Heart left ventricle (tissue), 16 donors: ENCODE measurements at regions of chr16 and their contacts with region 1.

Region 1: DNA sequence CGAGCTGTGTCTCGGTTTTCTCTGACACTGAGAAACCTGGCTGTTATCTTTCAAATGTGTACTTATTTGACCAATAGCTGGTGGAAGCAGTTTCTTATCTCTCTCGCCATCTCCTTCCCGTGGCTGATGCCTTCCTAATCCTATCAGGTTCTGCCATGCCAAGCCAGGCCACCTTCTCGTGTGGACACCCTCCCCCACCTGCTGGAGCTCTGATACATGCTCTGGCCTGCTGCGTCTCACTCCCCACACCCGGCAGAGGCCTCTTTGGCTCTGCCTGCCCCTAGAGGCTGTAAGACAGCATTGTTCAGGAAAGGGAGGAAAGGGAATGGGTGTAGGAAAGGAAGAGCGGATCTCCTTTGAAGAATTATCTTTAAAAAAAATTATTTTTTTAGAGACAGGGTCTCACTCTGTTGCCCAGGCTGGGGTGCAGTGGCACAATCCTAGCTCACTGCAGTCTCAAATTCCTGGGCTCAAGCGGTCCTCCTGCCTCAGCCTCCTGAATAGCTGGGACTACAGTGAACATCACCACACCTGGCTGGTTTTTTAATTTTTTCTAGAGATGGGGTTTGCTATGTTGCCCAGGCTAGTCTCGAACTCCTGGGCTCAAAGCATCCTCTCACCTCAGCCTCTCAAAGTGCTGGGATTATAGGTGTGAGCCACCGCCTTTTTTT is 7.5 kb upstream of the ARMC5 start:
- DNase-seq: peak in 2 of 5 donors; percentile 72 to 78
- ATAC-seq: peak; percentile 43 to 84 (median 79)
- H3K4me3 ChIP-seq: no peak overlapping the region
- H3K27ac ChIP-seq: peak overlapping the region in 8 of 12 donors; percentile 29 to 69 (median 54)
- H3K4me1 ChIP-seq: peaks cover 5 to 56% (median 46%) of the 10 kb centered on the region in 12 donors
- H3K27me3 ChIP-seq: no peaks in the 10 kb centered on the region
- CTCF ChIP-seq: peak; percentile 9 to 64 (median 40)
- POLR2A ChIP-seq: no peak

Region 2: DNA sequence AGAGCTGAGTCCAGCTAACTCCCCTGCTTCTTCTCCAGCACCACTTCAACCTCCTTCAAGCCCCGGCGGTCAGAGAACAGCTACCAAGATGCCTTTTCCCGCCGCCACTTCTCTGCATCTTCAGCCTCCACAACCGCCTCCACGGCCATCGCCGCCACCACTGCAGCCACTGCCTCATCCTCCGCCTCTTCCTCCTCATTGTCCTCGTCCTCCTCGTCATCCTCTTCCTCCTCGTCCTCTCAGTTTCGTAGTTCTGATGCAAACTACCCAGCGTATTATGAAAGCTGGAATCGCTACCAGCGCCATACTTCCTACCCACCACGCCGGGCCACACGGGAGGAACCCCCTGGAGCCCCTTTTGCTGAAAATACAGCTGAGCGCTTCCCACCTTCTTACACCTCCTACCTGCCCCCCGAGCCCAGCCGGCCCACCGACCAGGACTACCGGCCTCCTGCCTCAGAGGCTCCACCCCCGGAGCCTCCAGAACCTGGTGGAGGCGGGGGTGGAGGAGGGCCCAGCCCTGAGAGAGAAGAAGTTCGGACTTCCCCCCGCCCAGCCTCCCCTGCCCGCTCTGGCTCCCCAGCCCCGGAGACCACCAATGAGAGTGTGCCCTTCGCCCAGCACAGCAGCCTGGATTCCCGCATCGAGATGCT is 487.1 kb before region 1 on chr16:
- intact Hi-C with region 1: loop called in 3 of 10 experiments (anchors 5 to 10 kb)
- DNase-seq: peak in 1 of 5 donors; percentile 48
- ATAC-seq: no peak
- H3K4me3 ChIP-seq: no peak overlapping the region
- H3K27ac ChIP-seq: no peak overlapping the region
- H3K4me1 ChIP-seq: peaks cover 0 to 2% (median 0%) of the 10 kb centered on the region in 12 donors
- H3K27me3 ChIP-seq: no peaks in the 10 kb centered on the region
- CTCF ChIP-seq: no peak
- POLR2A ChIP-seq: no peak

Region 3: DNA sequence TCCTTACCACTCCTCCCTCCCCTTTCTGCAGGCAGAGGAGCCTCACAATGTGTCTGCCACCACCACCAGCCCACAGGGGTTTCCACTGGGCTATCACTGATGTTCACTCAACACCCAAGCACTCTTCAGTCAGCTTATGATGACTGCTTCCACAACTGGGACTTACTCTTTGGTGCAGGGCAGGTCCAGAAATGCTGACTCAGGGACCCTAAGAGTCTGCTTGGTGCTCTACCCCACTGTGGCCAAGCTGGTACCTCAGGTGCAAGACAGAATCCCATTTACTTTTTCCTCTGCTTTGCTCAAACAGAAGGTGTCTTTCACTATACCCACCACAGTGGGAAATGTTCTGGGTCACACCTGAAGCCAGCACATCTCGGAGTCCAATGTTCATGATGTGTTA is 461.9 kb after region 1 on chr16:
- intact Hi-C with region 1: no loop called
- DNase-seq: no peak
- ATAC-seq: no peak
- H3K4me3 ChIP-seq: no peak overlapping the region
- H3K27ac ChIP-seq: no peak overlapping the region
- H3K4me1 ChIP-seq: no peaks in the 10 kb centered on the region
- H3K27me3 ChIP-seq: no peaks in the 10 kb centered on the region
- CTCF ChIP-seq: no peak
- POLR2A ChIP-seq: no peak